HepG2 (cell line): ENCODE measurements at regions of chr6 and their contacts with region 1.

Region 1: GRCh38 chr6:144215932-144216667 is 65.8 kb downstream of the STX11 start:
- DNase-seq: peak; percentile 94
- ATAC-seq: peak; percentile 92
- H3K4me3 ChIP-seq: peak overlapping the region; percentile 68 to 89 (median 82)
- H3K27ac ChIP-seq: peak overlapping the region; percentile 81
- H3K4me1 ChIP-seq: peaks cover 23% of the 10 kb centered on the region
- H3K27me3 ChIP-seq: peaks cover 0 to 2% of the 10 kb centered on the region in 2 experiments; a peak in 1 of 5 replicates
- CTCF ChIP-seq: peak; percentile 89
- EP300 ChIP-seq: peak; percentile 51 to 71; a peak in 3 of 4 replicates
- POLR2A ChIP-seq: peak in 1 of 2 experiments; percentile 60; a peak in 3 of 4 replicates
- RAD21 ChIP-seq: peak; percentile 97

Region 2: GRCh38 chr6:144017166-144018094 is 198.7 kb before region 1 on chr6:
- CTCF ChIA-PET with region 1: no interaction called
- POLR2A ChIA-PET with region 1: no interaction called
- in situ Hi-C with region 1: no loop called
- intact Hi-C with region 1: no loop called
- DNase-seq: no peak
- ATAC-seq: no peak
- H3K4me3 ChIP-seq: no peak overlapping the region
- H3K27ac ChIP-seq: no peak overlapping the region
- H3K4me1 ChIP-seq: no peaks in the 10 kb centered on the region
- H3K27me3 ChIP-seq: no peaks in the 10 kb centered on the region
- CTCF ChIP-seq: no peak
- EP300 ChIP-seq: no peak
- POLR2A ChIP-seq: no peak
- RAD21 ChIP-seq: no peak

Region 3: GRCh38 chr6:144095331-144096002 is 120.6 kb before region 1 on chr6 and contains the start of gene SF3B5:
- CTCF ChIA-PET with region 1: no interaction called
- POLR2A ChIA-PET with region 1: no interaction called
- in situ Hi-C with region 1: loop called (anchors 5 kb)
- intact Hi-C with region 1: no loop called
- DNase-seq: peak; percentile 100
- ATAC-seq: peak; percentile 96
- H3K4me3 ChIP-seq: peak within 1 kb of the TSS; percentile 88 to 100 (median 98)
- H3K27ac ChIP-seq: peak within 1 kb of the TSS; percentile 83
- H3K4me1 ChIP-seq: peaks cover 36% of the 10 kb centered on the region
- H3K27me3 ChIP-seq: no peaks in the 10 kb centered on the region; a peak in 1 of 5 replicates
- CTCF ChIP-seq: no peak; the same call in 1 of the 2 replicates
- EP300 ChIP-seq: peak in 1 of 2 experiments; percentile 30; a peak in 1 of 4 replicates
- POLR2A ChIP-seq: peak; percentile 99
- RAD21 ChIP-seq: peak; percentile 7; the same call in 1 of the 2 replicates
- total RNA-seq, gene SF3B5: 263 and 346 TPM in 2 replicates

Region 4: DNA sequence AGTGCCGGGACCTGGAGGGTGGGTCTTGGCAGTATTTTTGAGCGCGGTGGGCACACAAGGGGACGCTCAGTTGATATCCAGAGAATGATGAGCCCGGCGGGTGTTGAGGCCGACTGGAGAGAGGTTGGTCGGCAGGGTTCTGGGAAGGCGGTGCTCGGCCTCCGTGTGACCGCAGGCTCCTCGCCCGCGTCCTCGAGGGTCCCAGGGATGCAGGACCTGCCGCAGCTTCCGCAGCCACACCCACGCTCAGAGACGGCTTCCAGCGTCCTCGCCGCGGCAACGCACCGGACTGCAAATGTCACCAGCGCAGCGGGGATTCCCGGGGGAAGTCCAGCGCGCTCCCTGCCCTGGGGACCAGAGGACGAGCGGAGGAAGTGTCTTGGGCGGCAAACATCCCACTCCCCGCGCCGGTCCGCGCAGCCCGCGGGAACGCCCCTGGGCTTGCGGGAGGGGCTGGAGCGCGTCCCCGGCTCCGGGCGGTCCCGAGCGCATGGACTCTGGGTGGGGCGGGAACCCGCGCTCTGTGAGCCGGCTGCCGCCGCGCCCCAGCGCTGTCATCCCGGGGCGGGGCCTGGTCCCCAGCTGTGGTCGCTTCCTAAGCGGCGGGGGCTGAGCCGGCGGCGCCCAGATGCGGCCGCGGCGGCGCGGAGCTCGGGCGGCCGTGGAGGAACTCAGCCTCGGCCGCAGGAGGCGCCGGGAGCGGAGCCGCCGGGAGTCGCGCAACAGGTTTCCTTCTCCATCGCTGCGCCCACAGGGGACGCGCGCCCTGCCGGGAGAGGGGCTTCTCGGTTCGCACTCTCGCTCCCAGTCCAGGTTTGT is 66.0 kb before region 1 on chr6 and contains the start of gene STX11:
- CTCF ChIA-PET with region 1: no interaction called
- POLR2A ChIA-PET with region 1: no interaction called
- in situ Hi-C with region 1: no loop called
- intact Hi-C with region 1: loop called (anchors 2 kb)
- DNase-seq: no peak
- ATAC-seq: peak; percentile 91
- H3K4me3 ChIP-seq: peak within 1 kb of the TSS; percentile 60 to 77 (median 71)
- H3K27ac ChIP-seq: no peak within 1 kb of the TSS
- H3K4me1 ChIP-seq: peaks cover 9% of the 10 kb centered on the region
- H3K27me3 ChIP-seq: peaks cover 2 to 47% of the 10 kb centered on the region in 2 experiments; a peak in 4 of 5 replicates
- CTCF ChIP-seq: no peak
- EP300 ChIP-seq: no peak
- POLR2A ChIP-seq: no peak
- RAD21 ChIP-seq: 0 out of 2 replicates have a peak, but pooled peaks have one; percentile 18
- total RNA-seq, gene STX11: not detected in 2 replicates

Region 5: DNA sequence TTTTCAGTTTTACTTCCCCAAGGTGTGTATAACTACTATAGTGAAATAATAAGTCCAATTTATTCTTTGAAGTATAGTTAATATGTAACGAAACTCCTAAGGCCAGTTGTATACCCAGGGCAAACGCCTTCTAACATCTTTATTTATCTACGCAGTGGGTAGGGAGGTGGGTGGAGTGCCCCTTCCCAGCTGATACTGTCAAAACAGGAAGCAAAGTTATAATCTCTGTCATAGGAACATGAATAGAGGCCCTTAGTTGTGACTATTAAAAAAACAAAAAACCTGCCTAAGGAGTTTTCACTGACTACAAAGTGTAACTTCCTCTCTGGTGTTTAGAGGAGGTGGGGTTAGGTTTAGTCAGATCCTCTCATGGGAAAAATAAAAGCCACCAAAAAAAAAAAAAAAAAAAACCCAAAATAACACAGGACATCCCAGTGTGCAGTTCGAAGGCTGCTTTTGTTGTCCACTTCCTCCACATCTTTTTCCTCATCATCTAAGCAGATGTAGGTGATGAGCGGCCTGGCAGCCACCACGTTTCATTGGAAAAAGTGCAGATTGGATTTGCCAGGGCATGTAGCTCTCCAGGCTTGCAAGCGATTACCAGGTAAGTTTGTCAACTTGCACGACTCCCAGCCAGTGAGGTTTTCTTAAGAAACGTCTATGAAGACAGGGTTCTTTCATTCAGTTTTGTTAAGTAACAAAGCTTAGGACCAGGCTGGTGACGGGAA is 127.8 kb after region 1 on chr6:
- CTCF ChIA-PET with region 1: no interaction called
- POLR2A ChIA-PET with region 1: interaction called, 3 read pairs
- in situ Hi-C with region 1: no loop called
- intact Hi-C with region 1: loop called (anchors 1 kb)
- DNase-seq: peak; percentile 98
- ATAC-seq: peak; percentile 95
- H3K4me3 ChIP-seq: peak overlapping the region in 2 of 3 experiments; percentile 36 to 47; a peak in 4 of 6 replicates
- H3K27ac ChIP-seq: peak overlapping the region; percentile 56
- H3K4me1 ChIP-seq: peaks cover 99% of the 10 kb centered on the region
- H3K27me3 ChIP-seq: no peaks in the 10 kb centered on the region
- CTCF ChIP-seq: no peak
- EP300 ChIP-seq: peak in 1 of 2 experiments; percentile 99; a peak in 2 of 4 replicates
- POLR2A ChIP-seq: no peak; a peak in 1 of 4 replicates
- RAD21 ChIP-seq: no peak

Region 6: GRCh38 chr6:144659202-144660182 is 443.4 kb after region 1 on chr6:
- CTCF ChIA-PET with region 1: no interaction called
- POLR2A ChIA-PET with region 1: no interaction called
- in situ Hi-C with region 1: no loop called
- intact Hi-C with region 1: loop called (anchors 2 kb)
- DNase-seq: peak; percentile 42
- ATAC-seq: peak; percentile 34
- H3K4me3 ChIP-seq: peak overlapping the region in 1 of 3 experiments; percentile 13; a peak in 1 of 6 replicates
- H3K27ac ChIP-seq: peak overlapping the region; percentile 60
- H3K4me1 ChIP-seq: peaks cover 95% of the 10 kb centered on the region
- H3K27me3 ChIP-seq: no peaks in the 10 kb centered on the region
- CTCF ChIP-seq: no peak
- EP300 ChIP-seq: no peak
- POLR2A ChIP-seq: no peak
- RAD21 ChIP-seq: no peak